ENCODE measurements at regions of chr6 and their contacts with region 1.

Region 1: GRCh38 chr6:158220786-158221442 is 52.8 kb downstream of the GTF2H5 start:
- DNase-seq: peak; percentile 89
- H3K4me3 ChIP-seq: no peak overlapping the region
- H3K27ac ChIP-seq: no peak overlapping the region
- H3K4me1 ChIP-seq: peaks cover 5% of the 10 kb centered on the region
- H3K27me3 ChIP-seq: no peaks in the 10 kb centered on the region

Region 2: GRCh38 chr6:157921685-157922367 is 299.1 kb before region 1 on chr6:
- in situ Hi-C with region 1: no loop called
- DNase-seq: peak; percentile 90
- H3K4me3 ChIP-seq: no peak overlapping the region
- H3K27ac ChIP-seq: peak overlapping the region; percentile 83
- H3K4me1 ChIP-seq: peaks cover 21% of the 10 kb centered on the region
- H3K27me3 ChIP-seq: no peaks in the 10 kb centered on the region

Region 3: DNA sequence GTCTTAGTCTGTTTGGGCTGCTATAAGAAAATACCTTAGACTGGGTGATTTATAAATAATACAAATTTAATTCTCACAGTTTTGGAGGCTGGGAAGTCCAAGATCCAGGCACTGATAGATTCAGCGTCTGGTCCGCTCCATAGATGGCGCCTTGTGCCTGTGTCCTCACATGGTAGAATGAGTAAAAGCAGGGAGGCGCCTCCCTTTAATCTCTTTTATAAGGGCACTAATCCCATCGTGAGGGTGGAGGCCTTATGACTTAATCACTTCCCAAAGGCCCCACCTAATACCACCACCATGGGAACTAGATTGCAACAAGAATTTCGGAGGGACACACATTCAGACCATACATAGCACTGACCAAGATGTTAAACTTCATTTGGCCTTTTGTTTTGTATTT is 247.8 kb after region 1 on chr6:
- in situ Hi-C with region 1: no loop called
- DNase-seq: no peak
- H3K4me3 ChIP-seq: no peak overlapping the region
- H3K27ac ChIP-seq: no peak overlapping the region
- H3K4me1 ChIP-seq: no peaks in the 10 kb centered on the region
- H3K27me3 ChIP-seq: no peaks in the 10 kb centered on the region

Region 4: GRCh38 chr6:158519761-158520160 is 298.8 kb after region 1 on chr6:
- in situ Hi-C with region 1: loop called (anchors 10 kb)
- DNase-seq: no peak
- H3K4me3 ChIP-seq: no peak overlapping the region
- H3K27ac ChIP-seq: no peak overlapping the region
- H3K4me1 ChIP-seq: peaks cover 7% of the 10 kb centered on the region; the same call in 1 of the 2 replicates
- H3K27me3 ChIP-seq: no peaks in the 10 kb centered on the region

Region 5: GRCh38 chr6:158605266-158605878 is 384.5 kb after region 1 on chr6:
- in situ Hi-C with region 1: loop called (anchors 10 kb)
- DNase-seq: peak; percentile 83
- H3K4me3 ChIP-seq: no peak overlapping the region
- H3K27ac ChIP-seq: no peak overlapping the region
- H3K4me1 ChIP-seq: no peaks in the 10 kb centered on the region
- H3K27me3 ChIP-seq: no peaks in the 10 kb centered on the region

Region 6: DNA sequence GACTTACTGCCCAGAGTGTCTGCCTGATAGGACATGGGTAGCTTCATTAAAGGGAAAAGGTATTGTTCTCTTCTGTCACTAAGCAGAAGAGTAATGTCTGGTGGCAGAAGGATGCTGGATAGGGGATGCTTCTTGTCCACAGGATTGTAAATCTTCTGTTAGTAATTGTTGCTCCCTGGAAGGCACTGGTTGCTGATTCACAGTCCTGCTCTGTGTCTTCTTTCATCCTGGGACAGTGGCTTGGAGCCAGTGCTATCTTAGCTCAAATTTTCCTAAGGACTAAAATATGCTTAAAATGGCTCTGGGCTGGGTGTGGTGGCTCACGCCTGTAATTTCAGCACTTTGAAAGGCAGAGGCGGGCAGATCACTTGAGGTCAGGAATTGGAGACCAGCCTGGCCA is 476.9 kb after region 1 on chr6:
- in situ Hi-C with region 1: loop called (anchors 10 kb)
- DNase-seq: peak; percentile 87
- H3K4me3 ChIP-seq: no peak overlapping the region
- H3K27ac ChIP-seq: peak overlapping the region; percentile 56
- H3K4me1 ChIP-seq: peaks cover 13% of the 10 kb centered on the region
- H3K27me3 ChIP-seq: no peaks in the 10 kb centered on the region

Measured in GM23248 (cell line).